ENCODE measurements at regions of chr12 and their contacts with region 1.

Region 1: DNA sequence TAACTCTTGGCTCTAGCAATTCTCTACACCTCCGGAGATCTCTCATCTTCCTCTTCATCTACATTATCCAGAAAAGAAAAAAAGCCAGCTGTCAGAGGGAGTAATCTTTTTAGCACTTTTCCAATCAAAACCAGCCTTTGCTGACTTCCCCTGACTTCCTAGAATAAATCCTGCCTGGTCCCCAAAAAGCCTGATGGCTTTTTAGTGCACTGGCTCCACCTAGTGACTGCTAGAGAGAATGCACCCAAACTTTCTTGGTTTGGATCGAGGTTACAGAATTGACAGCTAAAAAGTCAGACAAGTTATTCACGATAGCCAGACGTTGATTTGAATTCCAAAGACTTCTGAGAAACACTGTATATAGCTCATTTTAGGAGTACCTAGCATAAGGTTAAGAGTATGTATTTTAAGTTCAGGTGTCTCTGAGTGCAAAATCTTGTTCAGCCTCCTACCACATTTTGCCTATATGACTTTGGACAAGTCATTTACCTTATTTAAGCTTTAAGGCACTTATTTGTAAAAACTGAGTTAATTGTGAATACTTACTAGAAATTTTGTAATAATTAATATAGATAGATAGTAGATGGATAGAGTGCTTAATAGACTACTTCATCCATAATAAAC is 185.7 kb upstream of the GRIN2B start:
- DNase-seq: peak in 7 of 9 experiments; percentile 4 to 55 (median 42)
- ATAC-seq: peak; percentile 48
- H3K4me3 ChIP-seq: no peak overlapping the region
- H3K4me3 Mint-ChIP-seq: no peak overlapping the region
- H3K27ac ChIP-seq: no peak overlapping the region
- H3K27ac Mint-ChIP-seq: no peak overlapping the region
- H3K4me1 ChIP-seq: no peaks in the 10 kb centered on the region
- H3K4me1 Mint-ChIP-seq: peaks cover 3% of the 10 kb centered on the region
- H3K27me3 ChIP-seq: no peaks in the 10 kb centered on the region
- H3K27me3 Mint-ChIP-seq: peaks cover 5% of the 10 kb centered on the region
- CTCF ChIP-seq: peak; percentile 91

Region 2: DNA sequence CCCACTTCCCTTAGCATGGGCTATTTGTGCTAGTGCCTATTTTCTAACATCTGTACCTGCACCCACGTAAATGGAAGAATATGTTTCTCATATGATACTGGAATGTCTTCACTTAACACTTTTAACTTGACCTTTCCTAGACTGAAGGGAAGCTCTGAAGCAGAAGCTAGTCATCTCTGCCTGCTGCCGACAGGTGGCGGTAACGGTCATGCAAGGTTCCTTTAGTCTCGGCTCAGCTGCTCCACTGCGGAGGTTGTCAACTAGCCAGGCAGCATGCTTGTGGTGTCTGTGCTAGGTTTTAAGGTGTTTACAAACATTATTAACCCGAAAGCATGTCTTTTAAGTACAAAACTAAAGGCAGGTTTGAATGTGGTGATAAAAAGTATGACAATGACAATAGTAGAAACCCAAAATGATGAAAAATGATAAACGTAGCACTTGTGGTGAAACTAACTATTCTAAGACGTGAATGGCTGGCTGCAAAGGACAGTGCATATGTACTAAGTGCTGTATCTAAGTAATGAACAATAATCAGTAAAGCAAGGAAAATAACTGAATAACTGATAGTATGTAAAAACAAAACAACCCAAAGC is 302.9 kb before region 1 on chr12:
- CTCF ChIA-PET with region 1: interaction called, 5 read pairs
- POLR2A ChIA-PET with region 1: no interaction called
- intact Hi-C with region 1: loop called in 1 of 2 experiments (anchors 2 kb)
- DNase-seq: peak in 7 of 9 experiments; percentile 9 to 52 (median 26)
- ATAC-seq: no peak
- H3K4me3 ChIP-seq: no peak overlapping the region
- H3K4me3 Mint-ChIP-seq: no peak overlapping the region
- H3K27ac ChIP-seq: no peak overlapping the region
- H3K27ac Mint-ChIP-seq: no peak overlapping the region
- H3K4me1 ChIP-seq: no peaks in the 10 kb centered on the region
- H3K4me1 Mint-ChIP-seq: no peaks in the 10 kb centered on the region
- H3K27me3 ChIP-seq: no peaks in the 10 kb centered on the region
- H3K27me3 Mint-ChIP-seq: peaks cover 14% of the 10 kb centered on the region
- CTCF ChIP-seq: peak; percentile 63

Region 3: GRCh38 chr12:14111230-14111865 is 55.8 kb before region 1 on chr12:
- CTCF ChIA-PET with region 1: no interaction called
- POLR2A ChIA-PET with region 1: no interaction called
- intact Hi-C with region 1: no loop called
- DNase-seq: peak in 2 of 9 experiments; percentile 3 to 8
- ATAC-seq: no peak
- H3K4me3 ChIP-seq: no peak overlapping the region
- H3K4me3 Mint-ChIP-seq: no peak overlapping the region
- H3K27ac ChIP-seq: no peak overlapping the region
- H3K27ac Mint-ChIP-seq: no peak overlapping the region
- H3K4me1 ChIP-seq: no peaks in the 10 kb centered on the region
- H3K4me1 Mint-ChIP-seq: no peaks in the 10 kb centered on the region
- H3K27me3 ChIP-seq: no peaks in the 10 kb centered on the region
- H3K27me3 Mint-ChIP-seq: peaks cover 12% of the 10 kb centered on the region
- CTCF ChIP-seq: no peak

Measured in CD8-positive, alpha-beta T cell (primary cell).